ENCODE measurements at regions of chrX and their contacts with region 1.

Region 1: GRCh38 chrX:77785486-77786364 is at the start of gene ATRX:
- DNase-seq: peak; percentile 50
- ATAC-seq: peak; percentile 95
- H3K4me3 Mint-ChIP-seq: peak within 1 kb of the TSS; percentile 99
- H3K27ac Mint-ChIP-seq: peak within 1 kb of the TSS; percentile 100
- H3K4me1 Mint-ChIP-seq: peaks cover 36% of the 10 kb centered on the region
- H3K27me3 Mint-ChIP-seq: no peaks in the 10 kb centered on the region
- CTCF ChIP-seq: no peak
- total RNA-seq, gene ATRX: 114 and 120 TPM in 2 replicates

Region 2: GRCh38 chrX:76427560-76428242 is 1358.0 kb before region 1 on chrX and contains the start of gene MAGEE1:
- CTCF ChIA-PET with region 1: no interaction called
- POLR2A ChIA-PET with region 1: no interaction called
- intact Hi-C with region 1: loop called (anchors 10 kb)
- DNase-seq: peak; percentile 70
- ATAC-seq: peak; percentile 83
- H3K4me3 Mint-ChIP-seq: peak within 1 kb of the TSS; percentile 91
- H3K27ac Mint-ChIP-seq: peak within 1 kb of the TSS; percentile 76
- H3K4me1 Mint-ChIP-seq: peaks cover 11% of the 10 kb centered on the region
- H3K27me3 Mint-ChIP-seq: no peaks in the 10 kb centered on the region
- CTCF ChIP-seq: no peak
- total RNA-seq, gene MAGEE1: 3.1 and 3.3 TPM in 2 replicates

Region 3: DNA sequence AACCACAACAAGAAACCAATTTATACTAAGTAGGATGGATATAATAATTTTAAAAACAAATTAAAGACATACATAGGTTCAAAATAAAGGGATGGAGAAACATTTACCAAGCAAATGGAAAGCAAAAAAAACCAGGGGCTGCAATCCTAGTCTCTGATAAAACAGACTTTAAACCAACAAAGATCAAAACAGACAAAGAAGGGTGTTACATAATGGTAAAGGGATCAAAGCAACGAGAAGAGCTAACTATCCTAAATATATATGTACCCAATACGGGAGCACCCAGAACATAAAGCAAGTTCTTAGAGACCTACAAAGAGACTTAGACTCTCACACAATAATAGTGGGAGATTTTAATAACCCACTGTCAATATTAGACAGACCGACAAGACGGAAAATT is 66.3 kb before region 1 on chrX:
- CTCF ChIA-PET with region 1: no interaction called
- POLR2A ChIA-PET with region 1: interaction called, 7 read pairs
- intact Hi-C with region 1: loop called (anchors 2 kb)
- DNase-seq: no peak
- ATAC-seq: no peak
- H3K4me3 Mint-ChIP-seq: no peak overlapping the region
- H3K27ac Mint-ChIP-seq: peak overlapping the region; percentile 56
- H3K4me1 Mint-ChIP-seq: peaks cover 39% of the 10 kb centered on the region
- H3K27me3 Mint-ChIP-seq: no peaks in the 10 kb centered on the region
- CTCF ChIP-seq: no peak

Region 4: DNA sequence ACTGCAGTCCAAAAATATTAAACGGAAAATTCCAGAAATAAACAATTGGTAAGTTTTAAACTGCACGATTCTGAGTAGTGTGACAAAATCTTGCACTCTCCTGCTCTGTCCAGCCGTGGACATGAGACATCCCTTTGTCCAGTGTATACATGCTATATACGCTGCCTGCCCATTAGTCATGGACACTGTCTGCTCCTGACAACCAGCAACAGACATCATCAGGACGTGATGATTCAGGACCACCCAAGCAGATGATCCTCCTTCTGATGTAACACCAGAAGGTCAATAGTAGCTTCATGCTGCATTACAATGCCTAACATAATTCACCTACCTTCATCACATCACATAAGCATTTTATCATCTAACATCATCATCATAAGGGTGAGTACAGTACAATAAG is 36.0 kb before region 1 on chrX:
- CTCF ChIA-PET with region 1: no interaction called
- POLR2A ChIA-PET with region 1: no interaction called
- intact Hi-C with region 1: loop called (anchors 5 kb)
- DNase-seq: no peak
- ATAC-seq: no peak
- H3K4me3 Mint-ChIP-seq: no peak overlapping the region
- H3K27ac Mint-ChIP-seq: no peak overlapping the region
- H3K4me1 Mint-ChIP-seq: peaks cover 18% of the 10 kb centered on the region
- H3K27me3 Mint-ChIP-seq: no peaks in the 10 kb centered on the region
- CTCF ChIP-seq: no peak

Region 5: GRCh38 chrX:78024349-78025108 is 238.8 kb after region 1 on chrX:
- CTCF ChIA-PET with region 1: no interaction called
- POLR2A ChIA-PET with region 1: no interaction called
- intact Hi-C with region 1: loop called (anchors 5 kb)
- DNase-seq: peak; percentile 12
- ATAC-seq: peak; percentile 60
- H3K4me3 Mint-ChIP-seq: no peak overlapping the region
- H3K27ac Mint-ChIP-seq: no peak overlapping the region
- H3K4me1 Mint-ChIP-seq: no peaks in the 10 kb centered on the region
- H3K27me3 Mint-ChIP-seq: no peaks in the 10 kb centered on the region
- CTCF ChIP-seq: no peak

Region 6: DNA sequence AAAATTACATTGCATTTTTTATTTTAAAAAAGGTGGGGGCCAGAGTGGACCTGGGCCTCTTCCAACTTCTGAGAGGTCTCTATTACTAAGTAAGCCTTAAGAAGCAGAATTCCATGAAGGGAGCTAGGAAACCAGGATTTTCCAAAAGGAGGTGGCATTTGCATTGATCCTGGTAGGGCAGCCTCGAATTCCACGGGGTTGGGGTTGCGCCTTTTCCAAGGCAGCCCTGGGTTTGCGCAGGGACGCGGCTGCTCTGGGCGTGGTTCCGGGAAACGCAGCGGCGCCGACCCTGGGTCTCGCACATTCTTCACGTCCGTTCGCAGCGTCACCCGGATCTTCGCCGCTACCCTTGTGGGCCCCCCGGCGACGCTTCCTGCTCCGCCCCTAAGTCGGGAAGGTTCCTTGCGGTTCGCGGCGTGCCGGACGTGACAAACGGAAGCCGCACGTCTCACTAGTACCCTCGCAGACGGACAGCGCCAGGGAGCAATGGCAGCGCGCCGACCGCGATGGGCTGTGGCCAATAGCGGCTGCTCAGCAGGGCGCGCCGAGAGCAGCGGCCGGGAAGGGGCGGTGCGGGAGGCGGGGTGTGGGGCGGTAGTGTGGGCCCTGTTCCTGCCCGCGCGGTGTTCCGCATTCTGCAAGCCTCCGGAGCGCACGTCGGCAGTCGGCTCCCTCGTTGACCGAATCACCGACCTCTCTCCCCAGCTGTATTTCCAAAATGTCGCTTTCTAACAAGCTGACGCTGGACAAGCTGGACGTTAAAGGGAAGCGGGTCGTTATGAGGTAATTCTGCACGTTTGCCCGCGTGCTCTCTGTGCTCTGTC is 318.1 kb after region 1 on chrX and contains the start of gene PGK1:
- CTCF ChIA-PET with region 1: no interaction called
- POLR2A ChIA-PET with region 1: no interaction called
- intact Hi-C with region 1: loop called (anchors 2 kb)
- DNase-seq: peak; percentile 81
- ATAC-seq: peak; percentile 95
- H3K4me3 Mint-ChIP-seq: peak within 1 kb of the TSS; percentile 87
- H3K27ac Mint-ChIP-seq: peak within 1 kb of the TSS; percentile 90
- H3K4me1 Mint-ChIP-seq: peaks cover 41% of the 10 kb centered on the region
- H3K27me3 Mint-ChIP-seq: peaks cover 2% of the 10 kb centered on the region
- CTCF ChIP-seq: no peak
- total RNA-seq, gene PGK1: 293 and 295 TPM in 2 replicates